ENCODE measurements at regions of chr6 and their contacts with region 1.

Region 1: GRCh38 chr6:131199568-131200272 is 64.5 kb downstream of the AKAP7 start:
- DNase-seq: peak; percentile 61
- ATAC-seq: peak; percentile 99
- H3K4me3 Mint-ChIP-seq: peak overlapping the region; percentile 8
- H3K27ac Mint-ChIP-seq: 0 out of 2 replicates have a peak overlapping the region, but pooled peaks have one; percentile 25
- H3K4me1 Mint-ChIP-seq: peaks cover 33% of the 10 kb centered on the region
- H3K27me3 Mint-ChIP-seq: no peaks in the 10 kb centered on the region; the same call in 1 of the 2 replicates
- CTCF ChIP-seq: peak; percentile 46

Region 2: GRCh38 chr6:131519670-131520436 is 320.1 kb after region 1 on chr6:
- CTCF ChIA-PET with region 1: interaction called, 17 read pairs
- POLR2A ChIA-PET with region 1: no interaction called
- DNase-seq: peak; percentile 59
- ATAC-seq: peak; percentile 98
- H3K4me3 Mint-ChIP-seq: no peak overlapping the region
- H3K27ac Mint-ChIP-seq: no peak overlapping the region
- H3K4me1 Mint-ChIP-seq: peaks cover 3% of the 10 kb centered on the region
- H3K27me3 Mint-ChIP-seq: no peaks in the 10 kb centered on the region; the same call in none of the 2 replicates
- CTCF ChIP-seq: peak; percentile 26

Region 3: GRCh38 chr6:131532580-131533039 is 332.9 kb after region 1 on chr6:
- CTCF ChIA-PET with region 1: interaction called, 26 read pairs
- POLR2A ChIA-PET with region 1: no interaction called
- DNase-seq: no peak
- ATAC-seq: no peak
- H3K4me3 Mint-ChIP-seq: no peak overlapping the region
- H3K27ac Mint-ChIP-seq: no peak overlapping the region
- H3K4me1 Mint-ChIP-seq: peaks cover 20% of the 10 kb centered on the region
- H3K27me3 Mint-ChIP-seq: peaks cover 15% of the 10 kb centered on the region
- CTCF ChIP-seq: no peak

Measured in WTC11 (cell line).